Calu3 (cell line): ENCODE measurements at regions of chr4 and their contacts with region 1.

Region 1: DNA sequence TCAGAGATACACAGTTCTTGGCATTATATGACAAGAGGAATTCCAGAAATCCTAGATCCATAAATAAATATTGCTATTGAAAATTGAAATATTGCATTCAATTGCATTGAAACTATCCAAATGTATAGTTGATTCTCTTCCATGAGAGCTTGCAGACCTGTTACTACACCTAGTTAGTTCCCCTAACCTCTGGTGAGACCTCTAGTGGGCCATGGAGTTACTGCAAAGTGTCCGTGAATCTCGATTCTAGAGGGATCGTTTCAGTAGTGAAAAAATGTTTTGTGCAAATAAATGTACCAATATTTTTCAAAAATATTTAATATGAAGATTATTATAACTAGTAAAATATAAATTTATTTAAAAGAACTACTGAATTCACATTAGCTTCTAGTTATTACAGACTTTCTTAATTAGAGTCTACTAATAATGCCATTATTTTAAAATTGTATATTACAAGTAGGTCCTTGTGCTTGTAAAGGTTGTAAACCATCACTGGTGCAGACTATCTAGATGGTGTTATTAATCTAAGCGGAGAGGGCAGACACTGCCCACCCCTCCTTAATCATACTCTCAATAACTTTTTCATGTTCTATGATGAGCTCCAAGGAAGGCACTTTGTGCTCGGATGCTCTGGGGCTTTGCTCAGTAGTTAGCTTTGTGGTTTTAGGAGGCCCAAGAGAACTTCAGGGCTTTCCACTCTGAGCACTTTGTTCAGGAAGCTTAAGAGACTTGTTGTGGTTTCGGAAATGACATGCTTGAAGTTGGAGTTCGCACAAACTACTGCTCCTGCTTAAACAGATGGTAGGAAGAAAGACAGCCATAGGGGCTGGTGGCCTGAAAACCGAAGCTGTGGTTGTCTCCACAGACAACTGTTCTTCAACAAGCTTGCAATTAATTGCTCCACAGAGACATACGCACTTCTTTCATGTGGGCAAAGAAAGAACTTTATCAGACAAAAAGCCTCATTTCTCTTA is 42.8 kb downstream of the IL21 start:
- DNase-seq: peak; percentile 63
- H3K4me3 Mint-ChIP-seq: no peak overlapping the region
- H3K27ac Mint-ChIP-seq: no peak overlapping the region
- H3K4me1 Mint-ChIP-seq: no peaks in the 10 kb centered on the region
- H3K27me3 Mint-ChIP-seq: no peaks in the 10 kb centered on the region
- CTCF ChIP-seq: no peak

Region 2: GRCh38 chr4:121900132-121900983 is 677.7 kb before region 1 on chr4:
- CTCF ChIA-PET with region 1: interaction called, 8 read pairs
- intact Hi-C with region 1: loop called (anchors 2 kb)
- DNase-seq: peak; percentile 39
- H3K4me3 Mint-ChIP-seq: no peak overlapping the region
- H3K27ac Mint-ChIP-seq: no peak overlapping the region
- H3K4me1 Mint-ChIP-seq: no peaks in the 10 kb centered on the region
- H3K27me3 Mint-ChIP-seq: no peaks in the 10 kb centered on the region
- CTCF ChIP-seq: no peak

Region 3: GRCh38 chr4:122205690-122206089 is 372.4 kb before region 1 on chr4:
- CTCF ChIA-PET with region 1: no interaction called
- intact Hi-C with region 1: loop called (anchors 2 kb)
- DNase-seq: no peak
- H3K4me3 Mint-ChIP-seq: no peak overlapping the region
- H3K27ac Mint-ChIP-seq: no peak overlapping the region
- H3K4me1 Mint-ChIP-seq: no peaks in the 10 kb centered on the region
- H3K27me3 Mint-ChIP-seq: no peaks in the 10 kb centered on the region
- CTCF ChIP-seq: no peak

Region 4: GRCh38 chr4:122309988-122310626 is 268.0 kb before region 1 on chr4:
- CTCF ChIA-PET with region 1: no interaction called
- intact Hi-C with region 1: loop called (anchors 2 kb)
- DNase-seq: no peak
- H3K4me3 Mint-ChIP-seq: no peak overlapping the region
- H3K27ac Mint-ChIP-seq: no peak overlapping the region
- H3K4me1 Mint-ChIP-seq: no peaks in the 10 kb centered on the region
- H3K27me3 Mint-ChIP-seq: no peaks in the 10 kb centered on the region
- CTCF ChIP-seq: no peak

Region 5: GRCh38 chr4:122341906-122342305 is 236.2 kb before region 1 on chr4:
- CTCF ChIA-PET with region 1: no interaction called
- intact Hi-C with region 1: loop called (anchors 10 kb)
- DNase-seq: peak; percentile 4
- H3K4me3 Mint-ChIP-seq: no peak overlapping the region
- H3K27ac Mint-ChIP-seq: no peak overlapping the region
- H3K4me1 Mint-ChIP-seq: peaks cover 10% of the 10 kb centered on the region
- H3K27me3 Mint-ChIP-seq: no peaks in the 10 kb centered on the region
- CTCF ChIP-seq: no peak

Region 6: DNA sequence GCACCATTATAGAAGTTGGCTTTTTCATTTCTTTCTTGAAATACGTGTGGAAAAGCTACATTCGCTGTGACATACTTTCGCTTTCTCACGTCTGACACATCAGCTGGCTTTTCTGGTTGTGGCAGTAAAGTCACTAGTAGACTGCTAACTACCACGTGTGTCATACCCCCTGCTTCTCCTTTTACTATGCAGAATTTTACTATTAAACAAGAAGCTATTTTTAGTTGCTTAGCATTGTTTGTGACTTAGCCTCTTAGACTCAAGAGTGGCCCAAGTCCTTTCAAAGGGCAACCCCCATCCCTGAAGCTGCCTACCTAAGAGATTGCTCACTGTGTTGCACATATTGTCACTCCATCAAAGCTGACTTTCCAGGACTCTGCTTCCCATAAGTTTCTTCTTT is 119.5 kb before region 1 on chr4:
- CTCF ChIA-PET with region 1: no interaction called
- intact Hi-C with region 1: loop called (anchors 5 kb)
- DNase-seq: peak; percentile 14
- H3K4me3 Mint-ChIP-seq: peak overlapping the region; percentile 53
- H3K27ac Mint-ChIP-seq: no peak overlapping the region
- H3K4me1 Mint-ChIP-seq: no peaks in the 10 kb centered on the region
- H3K27me3 Mint-ChIP-seq: no peaks in the 10 kb centered on the region
- CTCF ChIP-seq: no peak

Region 7: DNA sequence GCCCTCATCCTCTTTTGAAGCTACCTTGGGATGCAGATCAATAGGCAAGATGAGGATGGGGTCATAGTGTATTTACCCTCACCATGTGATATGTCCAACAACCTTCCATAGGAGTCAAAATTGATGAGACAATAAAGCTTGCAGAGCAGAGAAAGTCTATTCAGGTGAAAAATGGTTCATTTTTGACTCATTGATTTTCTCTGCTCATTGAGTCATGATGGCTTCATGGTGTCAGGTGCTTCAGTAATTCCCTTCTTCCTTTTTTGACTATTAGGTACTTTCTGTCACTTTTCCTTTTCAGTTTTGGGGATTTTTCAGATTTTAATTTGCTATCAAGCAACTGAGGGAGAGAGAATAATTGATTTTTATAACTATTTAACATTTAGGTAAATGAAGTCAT is 65.7 kb before region 1 on chr4:
- CTCF ChIA-PET with region 1: no interaction called
- intact Hi-C with region 1: no loop called
- DNase-seq: no peak
- H3K4me3 Mint-ChIP-seq: no peak overlapping the region
- H3K27ac Mint-ChIP-seq: no peak overlapping the region
- H3K4me1 Mint-ChIP-seq: no peaks in the 10 kb centered on the region
- H3K27me3 Mint-ChIP-seq: peaks cover 51% of the 10 kb centered on the region
- CTCF ChIP-seq: no peak